Caco-2 (cell line): ENCODE measurements at regions of chr3 and their contacts with region 1.

Region 1: GRCh38 chr3:25904206-25904605 is 114.3 kb downstream of the OXSM start:
- DNase-seq: no peak
- H3K4me3 ChIP-seq: no peak overlapping the region
- H3K4me3 Mint-ChIP-seq: no peak overlapping the region
- H3K27ac Mint-ChIP-seq: no peak overlapping the region
- H3K4me1 ChIP-seq: no peaks in the 10 kb centered on the region
- H3K4me1 Mint-ChIP-seq: no peaks in the 10 kb centered on the region
- H3K27me3 ChIP-seq: no peaks in the 10 kb centered on the region
- H3K27me3 Mint-ChIP-seq: peaks cover 12% of the 10 kb centered on the region
- CTCF ChIP-seq: no peak

Region 2: GRCh38 chr3:25888892-25889524 is 15.2 kb before region 1 on chr3:
- CTCF ChIA-PET with region 1: no interaction called
- POLR2A ChIA-PET with region 1: no interaction called
- intact Hi-C with region 1: no loop called
- DNase-seq: no peak
- H3K4me3 ChIP-seq: no peak overlapping the region
- H3K4me3 Mint-ChIP-seq: no peak overlapping the region
- H3K27ac Mint-ChIP-seq: no peak overlapping the region
- H3K4me1 ChIP-seq: no peaks in the 10 kb centered on the region
- H3K4me1 Mint-ChIP-seq: no peaks in the 10 kb centered on the region
- H3K27me3 ChIP-seq: no peaks in the 10 kb centered on the region
- H3K27me3 Mint-ChIP-seq: no peaks in the 10 kb centered on the region
- CTCF ChIP-seq: no peak

Region 3: DNA sequence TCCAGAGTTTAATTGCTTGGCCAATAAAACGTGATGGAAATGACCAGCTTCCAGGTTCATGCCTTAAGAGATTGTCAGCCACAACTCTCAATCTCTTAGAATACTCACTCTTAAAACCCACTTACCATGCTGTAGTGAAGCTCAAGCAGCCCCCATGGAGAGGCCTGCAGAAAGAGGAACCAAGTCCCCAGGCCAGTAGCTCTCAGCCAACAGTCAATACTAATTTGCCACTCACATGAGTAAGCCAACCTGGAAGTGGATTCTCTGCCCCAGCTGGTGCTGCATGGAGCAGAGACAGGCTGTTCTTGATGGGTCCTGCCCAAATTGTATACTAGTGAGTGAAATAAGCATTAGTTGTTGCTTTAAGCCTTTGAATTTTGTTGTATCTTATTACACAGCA is 41.6 kb after region 1 on chr3:
- CTCF ChIA-PET with region 1: no interaction called
- POLR2A ChIA-PET with region 1: no interaction called
- intact Hi-C with region 1: no loop called
- DNase-seq: no peak
- H3K4me3 ChIP-seq: no peak overlapping the region
- H3K4me3 Mint-ChIP-seq: no peak overlapping the region
- H3K27ac Mint-ChIP-seq: no peak overlapping the region
- H3K4me1 ChIP-seq: no peaks in the 10 kb centered on the region
- H3K4me1 Mint-ChIP-seq: no peaks in the 10 kb centered on the region
- H3K27me3 ChIP-seq: no peaks in the 10 kb centered on the region
- H3K27me3 Mint-ChIP-seq: peaks cover 18% of the 10 kb centered on the region
- CTCF ChIP-seq: no peak

Region 4: DNA sequence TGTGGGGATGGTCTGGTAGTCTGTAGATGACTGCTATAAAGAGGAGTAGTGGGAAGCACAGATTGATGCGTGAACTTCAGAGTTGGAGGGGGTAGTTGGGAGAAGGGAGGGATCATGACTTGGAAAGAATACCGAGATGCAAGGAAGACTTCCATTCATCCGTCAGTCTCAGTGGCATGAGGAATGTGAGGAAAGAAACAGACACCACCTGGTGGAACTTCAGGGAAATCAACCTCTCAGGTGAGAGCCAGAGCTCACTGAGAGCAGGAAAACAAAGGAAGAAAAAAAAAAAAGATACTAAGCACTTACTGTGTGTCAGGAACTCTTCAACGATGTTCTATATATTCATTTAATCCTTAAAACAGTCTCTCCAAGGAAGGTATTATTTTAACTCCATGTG is 58.0 kb after region 1 on chr3:
- CTCF ChIA-PET with region 1: interaction called, 4 read pairs
- POLR2A ChIA-PET with region 1: no interaction called
- intact Hi-C with region 1: loop called (anchors 1 kb)
- DNase-seq: peak in 1 of 2 experiments; percentile 36
- H3K4me3 ChIP-seq: no peak overlapping the region
- H3K4me3 Mint-ChIP-seq: no peak overlapping the region
- H3K27ac Mint-ChIP-seq: no peak overlapping the region
- H3K4me1 ChIP-seq: no peaks in the 10 kb centered on the region
- H3K4me1 Mint-ChIP-seq: no peaks in the 10 kb centered on the region
- H3K27me3 ChIP-seq: no peaks in the 10 kb centered on the region
- H3K27me3 Mint-ChIP-seq: no peaks in the 10 kb centered on the region
- CTCF ChIP-seq: peak; percentile 34 to 61

Region 5: DNA sequence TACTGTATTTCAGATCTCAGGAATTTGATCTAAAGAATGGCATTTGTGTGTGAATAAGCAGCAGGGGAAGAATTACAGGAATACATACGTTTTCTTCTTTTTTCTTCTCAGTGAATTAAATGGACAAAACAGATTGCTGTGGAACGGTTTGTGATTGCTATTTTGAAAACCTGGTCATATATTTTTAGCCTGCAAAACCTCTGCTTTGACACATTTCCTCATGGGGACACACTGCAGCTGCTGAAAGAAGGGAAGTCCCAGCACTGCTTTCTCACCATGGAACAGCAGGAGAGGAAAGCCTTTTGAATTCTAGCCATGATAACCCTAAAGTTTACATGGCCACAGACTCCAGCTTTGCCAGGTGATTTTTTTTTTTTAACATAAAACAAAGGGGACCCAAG is 200.6 kb after region 1 on chr3:
- CTCF ChIA-PET with region 1: no interaction called
- POLR2A ChIA-PET with region 1: no interaction called
- intact Hi-C with region 1: no loop called
- DNase-seq: no peak
- H3K4me3 ChIP-seq: no peak overlapping the region
- H3K4me3 Mint-ChIP-seq: no peak overlapping the region
- H3K27ac Mint-ChIP-seq: no peak overlapping the region
- H3K4me1 ChIP-seq: no peaks in the 10 kb centered on the region
- H3K4me1 Mint-ChIP-seq: no peaks in the 10 kb centered on the region
- H3K27me3 ChIP-seq: no peaks in the 10 kb centered on the region
- H3K27me3 Mint-ChIP-seq: no peaks in the 10 kb centered on the region
- CTCF ChIP-seq: no peak